ENCODE measurements at regions of chr2 and their contacts with region 1.

Region 1: GRCh38 chr2:202911512-202912341 is at the starts of genes CARF and WDR12:
- DNase-seq: peak; percentile 97
- H3K4me3 Mint-ChIP-seq: peak within 1 kb of the TSS; percentile 99
- H3K27ac Mint-ChIP-seq: peak within 1 kb of the TSS; percentile 95
- H3K4me1 Mint-ChIP-seq: peaks cover 24% of the 10 kb centered on the region
- H3K27me3 Mint-ChIP-seq: no peaks in the 10 kb centered on the region
- total RNA-seq, gene CARF: 3.9 and 4.3 TPM in 2 replicates
- total RNA-seq, gene WDR12: 161 and 167 TPM in 2 replicates

Region 2: DNA sequence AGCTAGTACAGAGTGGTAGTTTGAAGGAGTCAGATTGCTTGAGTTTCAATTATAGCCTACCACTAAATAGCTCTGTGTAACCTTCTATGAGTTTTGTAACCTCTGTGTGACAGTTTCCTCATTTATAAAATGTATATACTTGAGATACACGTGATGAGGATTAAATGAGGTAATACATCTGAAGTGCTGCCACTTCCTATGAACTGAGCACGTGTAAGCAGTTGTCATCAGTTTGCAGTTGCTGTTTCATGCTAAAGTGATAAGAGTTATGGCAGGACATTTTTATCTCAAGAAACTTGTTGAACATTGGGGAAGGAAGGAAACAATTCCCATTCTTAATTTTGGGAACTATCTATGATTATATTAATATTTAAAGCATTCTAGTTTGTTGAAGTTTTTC is 38.9 kb after region 1 on chr2:
- intact Hi-C with region 1: no loop called
- DNase-seq: no peak
- H3K4me3 Mint-ChIP-seq: no peak overlapping the region
- H3K27ac Mint-ChIP-seq: no peak overlapping the region
- H3K4me1 Mint-ChIP-seq: no peaks in the 10 kb centered on the region
- H3K27me3 Mint-ChIP-seq: no peaks in the 10 kb centered on the region

Region 3: GRCh38 chr2:203014456-203015199 is 102.9 kb after region 1 on chr2 and contains the start of gene NBEAL1:
- intact Hi-C with region 1: loop called (anchors 1 kb)
- DNase-seq: peak; percentile 99
- H3K4me3 Mint-ChIP-seq: peak within 1 kb of the TSS; percentile 98
- H3K27ac Mint-ChIP-seq: peak within 1 kb of the TSS; percentile 77
- H3K4me1 Mint-ChIP-seq: peaks cover 31% of the 10 kb centered on the region
- H3K27me3 Mint-ChIP-seq: peaks cover 15% of the 10 kb centered on the region
- total RNA-seq, gene NBEAL1: 7.2 and 9.5 TPM in 2 replicates